ENCODE measurements at regions of chr13 and their contacts with region 1.

Region 1: DNA sequence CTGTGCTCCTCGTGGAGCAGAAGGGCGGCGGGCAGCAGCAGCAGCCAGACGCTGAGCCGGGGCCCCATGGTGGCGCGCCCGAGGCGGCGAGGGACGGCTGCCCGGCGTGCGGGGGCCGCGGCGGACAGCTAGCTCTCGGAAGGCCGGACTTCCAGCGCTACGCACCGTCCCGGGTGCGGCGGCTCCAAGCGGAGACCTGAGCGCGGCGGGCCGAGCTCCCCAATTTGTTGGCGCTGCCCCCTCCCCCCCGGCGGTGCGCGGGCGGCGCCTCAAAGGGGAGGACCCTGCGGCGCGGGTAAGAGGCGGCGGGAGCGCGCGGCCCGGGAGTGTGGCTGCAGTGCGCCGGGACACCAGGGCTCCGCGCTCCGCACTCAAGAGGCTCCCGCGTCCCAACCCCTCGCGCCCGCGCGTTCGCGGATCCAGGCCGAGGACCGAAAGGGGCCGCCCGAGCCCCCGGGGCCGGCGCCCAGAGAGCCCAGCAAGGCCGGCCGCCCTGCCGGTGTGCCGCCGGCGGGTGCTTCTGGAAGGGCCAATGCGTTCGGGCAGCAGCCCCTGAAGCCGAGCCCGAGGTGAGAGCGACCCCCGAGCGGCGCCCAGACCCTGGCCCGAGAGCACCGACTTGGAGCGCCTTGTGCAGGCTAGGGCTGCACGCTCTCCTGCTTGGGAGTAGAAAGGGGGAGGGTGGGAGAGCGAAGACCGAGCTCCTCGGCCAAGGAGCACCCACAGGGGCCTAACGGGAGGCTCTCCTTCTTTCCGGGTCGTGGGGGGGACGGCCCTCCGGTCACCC is at the starts of genes COL4A1 and COL4A2:
- DNase-seq: peak; percentile 89
- ATAC-seq: peak; percentile 84
- total RNA-seq, gene COL4A1: 107 TPM
- total RNA-seq, gene COL4A2: 91.2 TPM

Region 2: DNA sequence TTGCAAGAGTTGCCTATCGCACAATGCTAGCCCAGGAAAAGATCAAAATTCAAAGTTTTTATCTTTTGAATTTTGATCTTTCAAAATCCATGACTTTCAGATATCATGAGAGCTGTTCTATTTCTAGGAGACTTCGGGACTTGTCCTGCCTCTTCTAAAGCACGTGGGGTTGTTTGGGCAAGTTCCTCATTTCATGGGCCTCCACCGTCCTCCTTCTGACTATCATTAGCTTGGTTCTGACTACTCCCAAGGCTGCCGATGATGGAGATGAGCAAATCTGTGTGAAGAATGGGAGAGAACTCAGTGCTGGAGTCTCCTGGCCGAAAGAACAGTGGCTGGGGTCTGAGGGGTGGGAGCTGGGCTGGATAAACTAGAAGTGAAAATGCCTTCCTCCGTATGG is 86.7 kb before region 1 on chr13:
- intact Hi-C with region 1: loop called (anchors 5 kb)
- DNase-seq: no peak
- ATAC-seq: no peak